Aorta (tissue), 5 donors: ENCODE measurements at regions of chr7 and their contacts with region 1.

Region 1: DNA sequence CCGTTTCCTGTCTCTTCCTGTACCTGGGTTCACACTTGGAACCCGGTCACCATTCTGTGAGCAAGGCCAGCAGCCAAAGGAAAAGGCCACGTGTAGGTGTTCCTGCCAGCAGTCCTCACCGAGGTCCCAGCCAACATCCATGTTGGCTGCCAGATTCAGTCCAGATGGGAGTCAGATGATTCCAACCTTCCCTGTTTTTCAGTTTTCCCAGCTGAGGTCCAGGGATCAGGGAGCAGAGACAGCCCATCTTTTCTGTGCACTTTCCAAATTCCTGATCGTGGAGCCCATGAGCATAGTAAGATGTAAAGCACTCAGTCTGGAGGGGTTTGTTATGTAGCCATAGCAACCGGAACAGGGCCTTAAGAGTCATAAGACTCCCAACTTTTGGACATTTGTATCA is 3.9 kb upstream of the PVRIG start:
- DNase-seq: peak in 1 of 2 donors; percentile 46
- ATAC-seq: no peak
- H3K4me3 ChIP-seq: no peak overlapping the region
- H3K27ac ChIP-seq: no peak overlapping the region
- H3K4me1 ChIP-seq: no peaks in the 10 kb centered on the region
- H3K27me3 ChIP-seq: no peaks in the 10 kb centered on the region

Region 2: DNA sequence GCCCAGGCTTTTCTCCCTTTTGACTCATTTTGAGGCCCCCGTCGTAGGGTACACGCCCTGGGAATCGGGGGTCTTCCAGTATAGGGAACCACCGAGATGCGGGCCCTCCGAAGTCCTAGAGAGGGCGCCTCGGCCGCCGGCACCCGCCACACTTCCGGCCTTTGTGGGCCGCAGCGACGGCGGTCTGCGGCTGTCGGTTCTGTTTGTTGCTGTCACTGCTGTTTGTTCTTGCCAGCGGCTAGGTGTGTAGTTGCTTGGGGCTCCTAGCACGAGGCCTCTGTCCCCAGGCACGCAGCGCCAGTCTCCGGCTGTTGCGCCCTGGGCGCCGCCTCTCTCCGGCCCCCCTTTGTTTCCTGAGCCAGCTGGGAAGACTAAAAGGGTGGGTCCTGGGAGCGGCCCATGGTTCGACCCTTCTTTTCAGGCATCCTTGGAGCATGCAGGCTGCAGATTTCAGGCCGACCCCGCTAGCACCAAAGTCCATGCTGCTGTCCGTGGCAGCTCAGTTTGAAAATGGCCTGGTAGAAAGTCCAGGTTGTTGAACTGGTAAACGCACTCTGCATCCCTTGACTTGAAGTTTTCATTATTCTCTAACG is 218.3 kb before region 1 on chr7:
- intact Hi-C with region 1: loop called in 1 of 2 experiments (anchors 10 kb)
- DNase-seq: peak; percentile 66 to 82
- ATAC-seq: peak; percentile 73
- H3K4me3 ChIP-seq: peak overlapping the region; percentile 5 to 23
- H3K27ac ChIP-seq: peak overlapping the region in 1 of 2 donors; percentile 0
- H3K4me1 ChIP-seq: no peaks in the 10 kb centered on the region
- H3K27me3 ChIP-seq: no peaks in the 10 kb centered on the region

Region 3: DNA sequence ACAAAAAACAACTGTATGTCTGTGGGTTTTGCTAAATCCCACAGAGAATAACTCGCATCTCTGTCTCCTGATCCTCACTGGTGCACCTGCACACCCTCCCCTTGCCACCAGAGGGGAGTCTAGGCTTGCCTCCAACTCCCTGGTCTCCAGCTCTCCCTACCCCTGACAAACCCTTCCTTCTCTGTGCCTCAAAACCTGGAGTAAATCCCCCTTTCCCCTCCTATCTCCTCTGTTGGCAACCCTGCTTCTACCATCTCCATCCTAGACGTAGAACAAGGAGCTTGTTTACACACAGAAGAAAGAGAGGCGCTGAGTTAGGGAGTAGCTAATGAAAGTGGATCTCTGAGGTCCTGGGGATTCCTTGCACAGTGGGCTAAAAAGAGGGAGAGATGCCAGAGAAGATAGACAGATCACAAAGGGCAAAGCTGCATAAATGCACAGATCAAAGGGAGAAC is 83.2 kb before region 1 on chr7:
- intact Hi-C with region 1: loop called (anchors 2 to 10 kb)
- DNase-seq: no peak
- ATAC-seq: no peak
- H3K4me3 ChIP-seq: no peak overlapping the region
- H3K27ac ChIP-seq: no peak overlapping the region
- H3K4me1 ChIP-seq: no peaks in the 10 kb centered on the region
- H3K27me3 ChIP-seq: no peaks in the 10 kb centered on the region

Region 4: GRCh38 chr7:100189061-100189460 is 26.8 kb before region 1 on chr7:
- intact Hi-C with region 1: no loop called
- DNase-seq: no peak
- ATAC-seq: no peak
- H3K4me3 ChIP-seq: no peak overlapping the region
- H3K27ac ChIP-seq: no peak overlapping the region
- H3K4me1 ChIP-seq: no peaks in the 10 kb centered on the region
- H3K27me3 ChIP-seq: no peaks in the 10 kb centered on the region

Region 5: GRCh38 chr7:100435401-100436304 is 219.8 kb after region 1 on chr7:
- intact Hi-C with region 1: no loop called
- DNase-seq: peak; percentile 68 to 82
- ATAC-seq: peak; percentile 28
- H3K4me3 ChIP-seq: peak overlapping the region; percentile 77 to 95
- H3K27ac ChIP-seq: peak overlapping the region; percentile 77 to 83
- H3K4me1 ChIP-seq: no peaks in the 10 kb centered on the region
- H3K27me3 ChIP-seq: no peaks in the 10 kb centered on the region